Adrenal gland (tissue), 19 donors: ENCODE measurements at regions of chr22 and their contacts with region 1.

Region 1: GRCh38 chr22:45867118-45867905 is 109.7 kb downstream of the WNT7B start:
- DNase-seq: peak in 4 of 7 donors; percentile 29 to 53 (median 47)
- H3K4me3 ChIP-seq: peak overlapping the region in 1 of 4 donors; percentile 15
- H3K27ac ChIP-seq: no peak overlapping the region
- H3K4me1 ChIP-seq: peaks cover 11 to 13% of the 10 kb centered on the region in 2 donors
- H3K27me3 ChIP-seq: peaks cover 32% of the 10 kb centered on the region
- CTCF ChIP-seq: peak; percentile 10 to 52 (median 28)
- POLR2A ChIP-seq: no peak

Region 2: DNA sequence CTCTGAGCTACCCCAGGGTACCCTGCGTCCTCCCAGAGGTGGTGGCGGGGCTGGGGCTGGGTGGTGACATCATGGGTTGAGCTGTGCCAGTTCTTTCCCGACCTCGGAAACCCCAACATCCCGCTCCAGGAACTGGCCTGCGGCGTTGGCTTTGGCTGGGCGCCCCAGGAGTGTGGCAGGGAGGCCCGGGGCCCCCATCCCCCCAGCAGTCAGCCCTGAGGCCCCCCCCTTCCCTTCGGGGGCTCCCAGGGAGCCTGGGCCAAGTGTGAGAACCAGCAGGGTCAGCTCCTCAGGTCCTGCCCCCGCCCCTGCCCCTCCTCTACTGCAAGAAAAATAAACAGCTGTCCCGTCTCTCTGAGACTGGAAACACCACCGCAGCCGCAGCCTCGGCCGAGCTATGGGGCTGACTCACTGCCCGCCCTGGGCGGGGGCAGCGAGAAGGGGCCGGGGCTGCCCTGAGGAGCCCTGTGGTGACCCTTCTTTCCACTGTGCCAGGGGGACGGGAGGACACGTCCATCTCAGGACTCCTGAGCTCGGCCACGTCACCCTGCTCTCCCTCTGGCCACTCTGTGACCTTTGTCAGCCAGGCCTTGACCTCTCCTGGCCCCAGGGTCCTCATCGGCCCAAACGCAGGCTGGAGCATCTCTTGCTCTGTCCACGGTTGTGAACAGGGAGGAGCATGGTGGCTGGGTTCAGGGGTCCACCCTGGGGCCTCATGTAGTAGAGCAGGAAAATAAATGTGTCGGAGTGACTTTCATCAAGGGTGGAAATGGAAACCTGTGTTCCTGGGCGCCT is 36.2 kb after region 1 on chr22:
- intact Hi-C with region 1: no loop called
- DNase-seq: peak in 6 of 7 donors; percentile 38 to 60 (median 46)
- H3K4me3 ChIP-seq: no peak overlapping the region
- H3K27ac ChIP-seq: peak overlapping the region in 2 of 5 donors; percentile 13 to 38
- H3K4me1 ChIP-seq: peaks cover 0 to 15% of the 10 kb centered on the region in 2 donors
- H3K27me3 ChIP-seq: peaks cover 9% of the 10 kb centered on the region
- CTCF ChIP-seq: no peak
- POLR2A ChIP-seq: no peak

Region 3: DNA sequence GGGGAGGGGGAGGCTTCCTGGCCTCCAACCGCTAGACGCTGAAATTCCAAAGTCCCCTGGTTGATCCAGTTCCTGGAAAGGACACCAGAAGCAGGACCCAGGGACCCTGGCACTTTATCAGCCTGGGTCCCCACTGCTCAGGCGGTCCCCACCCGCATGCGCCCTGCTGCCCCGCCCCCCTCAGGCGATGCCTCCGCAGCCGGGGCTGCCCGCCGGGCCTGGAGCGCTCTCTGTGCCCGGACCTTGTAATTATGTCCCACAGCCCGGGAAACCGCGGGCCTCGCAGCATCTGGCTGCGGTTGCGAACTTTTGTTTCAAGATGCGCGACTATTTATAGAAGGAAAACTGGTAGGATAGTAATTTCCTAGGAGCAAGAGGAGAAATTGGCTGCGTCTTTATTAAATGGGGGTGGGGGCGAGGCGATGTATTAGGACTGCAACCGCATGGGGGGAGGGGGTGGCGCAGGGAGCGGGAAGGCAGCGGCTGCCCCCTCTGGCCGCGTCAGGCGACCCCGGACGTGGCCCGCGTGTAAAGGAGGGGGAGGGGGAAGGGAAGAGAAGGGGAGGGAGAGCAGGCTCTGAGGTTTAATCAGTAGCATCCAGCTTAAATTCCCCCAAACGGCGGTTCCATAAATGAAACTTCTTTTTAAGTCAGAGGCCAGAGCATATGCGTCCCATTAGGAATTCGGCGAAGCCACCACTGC is 103.5 kb after region 1 on chr22:
- intact Hi-C with region 1: loop called in 1 of 2 experiments (anchors 5 kb)
- DNase-seq: no peak
- H3K4me3 ChIP-seq: no peak overlapping the region
- H3K27ac ChIP-seq: no peak overlapping the region
- H3K4me1 ChIP-seq: peaks cover 12 to 15% of the 10 kb centered on the region in 2 donors
- H3K27me3 ChIP-seq: peaks cover 70% of the 10 kb centered on the region
- CTCF ChIP-seq: no peak
- POLR2A ChIP-seq: no peak

Region 4: DNA sequence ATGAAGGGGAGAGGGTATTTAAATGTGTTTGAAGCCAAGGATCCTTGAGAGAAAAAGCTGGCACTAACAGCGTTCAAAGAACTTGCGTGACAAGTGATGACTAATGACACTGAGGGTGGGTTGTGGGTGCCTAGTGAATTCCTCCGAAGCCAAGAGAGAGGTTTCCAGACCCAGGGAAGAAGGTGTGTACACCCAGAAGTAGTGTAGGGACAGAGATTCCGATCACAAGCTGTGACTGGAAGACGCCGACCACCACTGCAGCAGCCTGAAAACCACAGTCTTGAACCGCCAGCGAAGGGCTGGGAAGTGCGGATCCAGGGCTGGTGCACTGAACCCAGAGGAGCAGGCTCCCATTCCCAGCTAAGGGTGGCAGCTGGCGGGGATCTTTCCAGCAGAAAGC is 292.5 kb after region 1 on chr22:
- intact Hi-C with region 1: no loop called
- DNase-seq: peak in 1 of 7 donors; percentile 39
- H3K4me3 ChIP-seq: no peak overlapping the region
- H3K27ac ChIP-seq: no peak overlapping the region
- H3K4me1 ChIP-seq: peaks cover 0 to 10% of the 10 kb centered on the region in 2 donors
- H3K27me3 ChIP-seq: no peaks in the 10 kb centered on the region
- CTCF ChIP-seq: no peak
- POLR2A ChIP-seq: no peak